ENCODE measurements at regions of chr16 and their contacts with region 1.

Region 1: DNA sequence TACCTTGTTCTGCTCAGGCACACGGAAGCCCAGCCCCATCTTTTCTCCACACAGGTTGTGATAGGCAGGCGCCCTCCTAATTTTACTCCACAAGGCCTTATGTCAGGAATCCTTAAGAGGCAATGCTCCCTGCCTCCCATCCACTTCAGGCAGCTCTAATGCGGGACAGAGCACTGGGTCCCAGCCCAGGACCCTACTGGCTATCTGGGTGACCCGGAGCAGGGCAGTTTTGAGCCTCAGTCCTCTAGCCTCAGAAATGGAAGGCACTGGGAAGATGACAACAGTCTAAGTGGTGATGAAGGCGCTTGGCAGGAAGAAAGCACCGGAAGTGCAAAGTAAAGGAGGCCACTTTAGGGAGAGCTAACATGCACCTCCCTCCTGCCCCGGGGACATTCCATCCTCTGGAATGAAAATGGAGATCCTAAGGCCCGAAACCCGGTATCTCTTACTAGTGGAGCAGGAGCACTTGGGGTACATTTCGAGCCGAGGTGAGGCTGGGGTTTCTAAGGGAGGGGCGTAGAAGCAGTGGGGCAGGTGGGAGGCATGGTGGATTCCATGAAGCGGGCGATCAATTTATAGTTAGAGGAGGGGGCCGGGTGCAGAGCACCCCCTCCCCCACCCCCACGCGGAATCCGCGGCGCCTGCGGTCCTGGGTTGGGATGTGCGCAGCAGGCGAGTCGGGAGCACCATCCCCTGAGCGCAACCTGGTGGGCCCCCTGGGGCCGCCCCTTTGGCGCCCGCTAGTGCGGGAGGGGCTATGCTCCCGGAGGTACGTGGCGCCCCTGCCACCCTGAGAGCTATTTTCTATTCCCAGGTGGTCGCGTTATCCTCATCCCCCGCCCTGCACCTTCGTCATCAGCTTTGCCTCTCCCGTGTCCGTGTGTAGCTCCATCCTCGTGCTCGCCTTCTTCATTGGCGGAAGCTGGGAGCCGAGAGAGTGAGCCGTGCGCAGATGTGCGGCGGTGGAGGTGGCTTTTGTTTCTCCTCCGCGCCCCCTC is 4.9 kb downstream of the MT1F start:
- DNase-seq: no peak
- ATAC-seq: peak; percentile 24; the same call in 1 of the 2 replicates
- H3K4me3 ChIP-seq: no peak overlapping the region
- H3K27ac ChIP-seq: no peak overlapping the region
- H3K4me1 ChIP-seq: peaks cover 3% of the 10 kb centered on the region; the same call in 1 of the 2 replicates
- H3K27me3 ChIP-seq: peaks cover 92% of the 10 kb centered on the region
- CTCF ChIP-seq: no peak
- POLR2A ChIP-seq: no peak
- RAD21 ChIP-seq: no peak

Region 2: GRCh38 chr16:56691885-56692284 is 29.2 kb after region 1 on chr16:
- CTCF ChIA-PET with region 1: no interaction called
- POLR2A ChIA-PET with region 1: no interaction called
- dilution Hi-C with region 1: no loop called
- in situ Hi-C with region 1: no loop called
- intact Hi-C with region 1: loop called (anchors 2 kb)
- DNase-seq: peak; percentile 17
- ATAC-seq: no peak
- H3K4me3 ChIP-seq: no peak overlapping the region
- H3K27ac ChIP-seq: no peak overlapping the region
- H3K4me1 ChIP-seq: no peaks in the 10 kb centered on the region
- H3K27me3 ChIP-seq: no peaks in the 10 kb centered on the region
- CTCF ChIP-seq: no peak
- POLR2A ChIP-seq: no peak
- RAD21 ChIP-seq: no peak

Measured in IMR-90 (cell line).